AG04449 (cell line): ENCODE measurements at regions of chr17 and their contacts with region 1.

Region 1: GRCh38 chr17:45021607-45022287 is 29.7 kb downstream of the DCAKD start:
- DNase-seq: no peak
- H3K4me3 ChIP-seq: peak overlapping the region; percentile 53
- CTCF ChIP-seq: peak; percentile 64

Region 2: GRCh38 chr17:44775136-44775837 is 246.5 kb before region 1 on chr17:
- CTCF ChIA-PET with region 1: interaction called, 40 read pairs
- POLR2A ChIA-PET with region 1: interaction called, 3 read pairs
- DNase-seq: peak; percentile 76
- H3K4me3 ChIP-seq: peak overlapping the region; percentile 77
- CTCF ChIP-seq: no peak

Region 3: DNA sequence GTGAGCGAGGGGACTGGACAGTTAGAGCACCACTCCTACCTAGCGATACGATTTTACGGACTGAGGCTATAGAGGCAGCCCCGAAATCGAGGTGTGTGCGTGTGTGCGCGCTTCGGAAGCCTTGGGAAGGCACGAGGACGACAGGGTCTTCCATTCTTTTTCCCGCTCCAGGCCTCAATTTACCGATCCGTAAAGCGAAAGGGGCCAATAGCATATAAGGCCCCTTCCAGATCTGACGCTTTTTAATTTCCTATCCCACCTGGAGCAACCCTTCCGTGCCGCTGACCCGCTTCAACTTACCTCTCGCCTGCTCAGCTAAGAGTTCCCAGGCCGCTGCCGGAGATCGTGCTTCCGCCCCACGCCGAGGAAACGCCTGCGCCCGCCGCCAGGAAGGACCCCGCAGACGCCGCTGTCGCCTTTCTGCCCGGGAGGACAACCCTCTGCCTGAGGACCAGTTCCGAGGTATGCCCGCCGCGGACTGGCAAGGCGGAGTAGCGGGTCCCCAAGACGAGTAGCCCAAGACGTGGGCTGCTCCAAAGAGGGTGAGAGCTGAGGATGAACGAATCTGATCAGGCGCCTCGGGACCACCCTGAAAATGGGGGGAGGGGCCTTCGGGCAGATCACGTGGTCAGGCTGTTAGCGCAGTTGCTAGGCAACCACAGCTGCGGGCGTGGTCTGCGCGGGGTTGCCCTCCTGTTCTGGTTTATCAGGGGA is 122.5 kb before region 1 on chr17 and contains the start of gene EFTUD2:
- CTCF ChIA-PET with region 1: interaction called, 137 read pairs
- POLR2A ChIA-PET with region 1: interaction called, 3 read pairs
- DNase-seq: no peak
- H3K4me3 ChIP-seq: peak within 1 kb of the TSS; percentile 100
- CTCF ChIP-seq: no peak

Region 4: DNA sequence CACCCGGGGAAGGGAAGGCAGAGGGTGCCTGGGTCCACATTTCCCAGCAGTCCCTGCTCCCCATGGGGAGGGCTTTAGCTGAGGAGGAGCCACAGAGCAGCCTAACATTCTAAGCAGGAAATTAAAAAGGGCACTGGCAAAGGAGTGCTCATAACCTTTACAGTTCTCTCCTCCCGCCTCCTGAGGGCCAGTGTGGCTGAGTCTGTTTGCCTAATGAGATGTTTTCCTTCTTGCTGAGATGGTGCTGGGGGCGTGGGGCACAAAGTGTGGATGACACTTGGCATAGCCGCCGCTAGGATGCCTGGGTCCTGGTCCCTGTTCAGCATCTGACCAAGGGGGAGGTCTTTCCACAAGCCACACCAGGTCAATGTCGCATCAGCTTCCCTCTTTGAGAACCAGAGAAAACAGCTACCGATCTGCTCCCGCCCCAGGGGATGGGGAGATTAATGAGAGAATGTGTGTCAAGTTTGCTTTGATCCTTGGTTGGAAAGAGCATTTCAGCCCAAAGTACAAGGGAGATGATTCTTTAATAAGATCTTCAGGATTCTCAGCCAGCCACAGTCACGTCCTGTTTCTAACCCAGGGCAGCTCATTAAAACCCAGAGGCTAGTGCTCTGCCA is 79.9 kb before region 1 on chr17:
- CTCF ChIA-PET with region 1: interaction called, 11 read pairs
- POLR2A ChIA-PET with region 1: no interaction called
- DNase-seq: no peak
- H3K4me3 ChIP-seq: no peak overlapping the region
- CTCF ChIP-seq: no peak

Region 5: DNA sequence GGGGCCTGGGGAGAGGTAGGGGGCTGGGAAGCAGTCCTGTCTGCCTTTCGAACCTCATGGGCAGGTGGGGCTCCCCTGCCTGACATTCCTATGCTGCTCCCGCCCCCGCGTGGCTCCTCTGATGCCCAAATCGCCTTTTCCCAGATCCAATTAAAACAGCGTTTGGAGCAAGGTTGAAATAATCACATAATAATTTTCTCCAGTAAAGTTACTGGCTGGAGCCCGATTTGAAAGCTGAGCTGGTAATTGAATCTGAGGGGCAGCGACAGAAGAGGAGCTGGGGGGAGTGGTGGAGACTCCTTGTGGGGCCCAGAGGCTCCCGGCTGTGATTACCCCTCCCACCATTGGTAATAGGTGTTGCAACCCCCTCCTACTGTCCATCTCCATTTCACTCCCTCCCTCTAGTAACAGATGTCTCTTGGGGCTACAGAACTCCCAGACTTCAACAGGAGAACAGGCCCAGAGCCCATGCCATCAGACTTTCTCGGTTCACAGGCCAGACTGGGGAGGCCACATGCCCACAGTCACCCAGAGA is 14.8 kb before region 1 on chr17:
- CTCF ChIA-PET with region 1: interaction called, 52 read pairs
- POLR2A ChIA-PET with region 1: no interaction called
- DNase-seq: no peak
- H3K4me3 ChIP-seq: no peak overlapping the region
- CTCF ChIP-seq: no peak

Region 6: GRCh38 chr17:45088741-45089140 is 67.0 kb after region 1 on chr17:
- CTCF ChIA-PET with region 1: no interaction called
- POLR2A ChIA-PET with region 1: no interaction called
- DNase-seq: no peak
- H3K4me3 ChIP-seq: no peak overlapping the region
- CTCF ChIP-seq: no peak

Region 7: DNA sequence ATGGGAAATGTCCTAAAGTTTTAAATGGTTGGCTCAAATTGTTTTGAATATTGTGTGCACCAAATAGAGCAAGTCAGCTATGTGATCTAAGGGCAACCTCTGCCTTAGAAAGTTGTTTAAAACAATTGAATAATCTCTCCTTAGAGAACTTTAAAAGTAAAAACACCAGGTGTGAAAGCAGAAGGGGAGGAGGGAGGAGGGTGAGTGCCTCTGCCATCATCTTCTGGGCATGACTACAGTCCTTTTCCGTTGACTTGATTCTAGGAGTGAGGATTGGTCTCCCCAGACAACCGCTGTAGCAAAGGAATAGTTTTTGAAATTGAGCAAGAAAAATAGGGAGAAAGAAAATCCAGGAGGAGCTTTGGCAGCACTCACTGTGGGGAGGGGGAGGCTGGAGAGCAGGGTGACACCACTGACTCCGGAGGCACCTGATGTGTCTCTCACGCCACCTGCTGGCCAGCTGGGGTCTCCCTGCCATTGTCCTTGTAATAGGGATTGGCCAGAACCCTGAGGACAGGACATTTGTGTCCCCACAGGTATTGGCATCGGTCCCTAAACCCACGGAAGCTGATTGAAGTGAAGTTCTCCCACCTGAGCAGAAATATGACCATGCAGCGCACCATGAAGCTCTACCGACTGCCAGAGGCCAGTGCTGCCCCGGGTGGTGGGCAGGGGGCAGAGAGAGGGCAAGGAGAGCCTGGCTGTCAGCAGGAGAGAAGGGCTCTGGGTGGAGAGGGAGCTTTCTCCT is 77.3 kb after region 1 on chr17:
- CTCF ChIA-PET with region 1: interaction called, 64 read pairs
- POLR2A ChIA-PET with region 1: no interaction called
- DNase-seq: no peak
- H3K4me3 ChIP-seq: no peak overlapping the region
- CTCF ChIP-seq: peak; percentile 89

Region 8: DNA sequence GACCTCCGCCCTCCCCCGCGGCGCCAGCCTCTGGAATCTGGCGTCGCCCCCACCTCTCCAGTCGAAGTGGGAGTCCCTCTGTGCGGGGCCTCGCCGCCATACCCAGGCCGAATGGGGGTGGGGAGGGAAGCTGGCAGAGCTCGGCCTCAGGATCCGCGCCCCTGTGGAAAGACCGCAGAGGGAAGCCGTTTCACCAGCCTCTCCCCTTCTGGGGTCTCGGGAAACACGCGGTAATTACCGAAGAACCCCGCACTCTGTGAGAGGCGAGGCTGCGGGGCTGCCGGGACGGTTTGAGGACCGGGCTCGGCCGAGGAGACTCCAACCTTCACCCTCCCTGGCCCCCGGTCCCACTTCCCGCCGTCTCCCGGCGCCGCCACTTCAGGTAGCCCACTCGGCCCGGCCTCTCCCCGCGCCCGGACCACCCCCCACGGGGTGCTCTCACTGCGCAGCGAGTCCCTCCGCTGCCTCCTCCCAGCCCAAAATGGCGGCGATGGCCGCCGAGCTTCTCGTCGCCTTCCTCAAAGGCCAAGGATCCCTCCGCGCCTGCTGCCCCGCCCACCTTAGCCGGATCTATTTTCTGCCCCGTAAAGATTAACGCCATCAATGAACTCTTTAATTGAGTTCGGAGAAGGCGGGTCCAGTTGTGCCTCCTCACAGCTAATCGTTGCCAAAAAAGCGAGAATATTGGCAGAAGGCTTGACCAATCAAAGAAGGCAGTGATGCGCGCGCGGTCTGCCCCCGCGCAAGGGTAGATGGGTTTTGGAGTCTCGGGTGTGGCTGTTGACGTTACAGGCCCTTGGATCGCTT is 139.5 kb after region 1 on chr17:
- CTCF ChIA-PET with region 1: no interaction called
- POLR2A ChIA-PET with region 1: no interaction called
- DNase-seq: peak; percentile 100
- H3K4me3 ChIP-seq: peak overlapping the region; percentile 92
- CTCF ChIP-seq: no peak

Region 9: DNA sequence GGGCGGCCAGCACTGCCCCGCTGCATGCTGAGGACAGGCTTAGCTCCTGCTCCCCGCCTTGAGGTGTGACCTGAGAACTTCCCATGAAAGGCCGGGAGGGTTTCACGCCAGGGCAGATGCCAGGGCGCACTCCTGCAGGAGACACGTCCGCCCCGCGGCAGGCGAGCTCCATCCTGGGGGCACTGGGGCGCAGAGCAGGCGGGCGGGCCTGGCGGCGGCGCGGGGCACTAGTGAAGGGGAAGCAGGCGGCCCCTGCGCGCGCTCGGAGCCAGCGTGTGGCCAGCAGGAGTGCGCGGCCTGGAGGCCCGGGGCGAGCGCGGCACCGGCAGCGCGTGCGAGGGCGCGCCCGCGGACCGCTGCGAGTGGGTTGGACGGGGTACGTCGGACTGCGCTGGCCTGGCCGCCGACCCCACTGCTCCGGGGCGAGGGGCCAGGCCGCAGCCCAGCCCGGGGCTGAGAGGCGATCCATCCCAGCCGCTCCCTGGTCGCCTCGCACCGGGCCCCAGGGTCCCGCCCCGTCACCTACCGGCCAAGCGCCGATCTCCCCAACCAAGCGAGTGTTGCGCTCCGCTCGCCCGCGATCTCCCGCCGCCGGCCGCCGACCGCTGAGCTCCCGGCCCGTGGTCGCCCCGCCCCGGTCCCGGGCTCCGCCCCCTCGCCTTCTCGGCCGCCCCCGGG is 294.8 kb after region 1 on chr17 and contains the start of gene MAP3K14:
- CTCF ChIA-PET with region 1: no interaction called
- POLR2A ChIA-PET with region 1: no interaction called
- DNase-seq: no peak
- H3K4me3 ChIP-seq: peak within 1 kb of the TSS; percentile 86
- CTCF ChIP-seq: peak; percentile 13